Heart left ventricle (tissue), 16 donors: ENCODE measurements at regions of chr5 and their contacts with region 1.

Region 1: DNA sequence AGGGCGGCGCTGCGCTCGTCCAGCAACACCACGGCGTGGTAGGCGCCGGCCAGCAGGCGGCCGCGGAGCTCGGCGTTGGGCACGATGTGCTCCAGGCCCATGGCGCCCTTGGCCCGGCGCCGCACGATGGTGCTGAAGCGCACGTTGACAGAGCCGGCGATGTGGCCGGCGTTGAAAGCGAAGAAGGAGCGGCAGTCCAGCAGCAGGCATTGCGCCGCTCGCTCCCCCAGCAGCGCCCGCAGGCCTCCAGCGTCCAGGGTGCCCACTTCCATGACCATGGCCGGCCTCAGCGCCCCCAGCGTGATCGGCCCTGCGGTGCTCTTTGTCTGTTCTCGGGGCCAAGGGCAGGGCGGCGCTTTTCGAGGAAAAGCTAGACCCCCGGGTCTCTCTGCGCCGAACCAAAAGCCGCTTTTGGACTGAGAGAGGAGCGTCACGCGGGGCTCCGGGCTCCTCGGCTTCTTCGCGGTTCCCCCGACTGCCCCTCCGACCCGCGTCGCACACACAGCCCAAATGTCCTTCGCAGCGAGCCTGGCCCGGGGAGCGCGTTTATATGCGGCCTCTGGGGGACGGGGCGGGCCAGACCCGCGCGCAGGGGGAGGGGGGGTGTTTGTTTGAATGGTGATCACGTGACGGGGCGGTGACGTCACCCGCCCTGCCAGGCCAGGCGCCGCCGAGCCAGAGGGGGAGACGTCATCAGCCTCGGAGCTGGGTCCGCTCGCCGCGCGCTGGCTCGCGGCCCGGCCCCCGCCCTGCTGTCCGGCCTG is at the start of gene DUSP1:
- DNase-seq: peak; percentile 100
- ATAC-seq: peak; percentile 46 to 85 (median 66)
- H3K4me3 ChIP-seq: peak within 1 kb of the TSS; percentile 66 to 98 (median 88)
- H3K27ac ChIP-seq: peak within 1 kb of the TSS; percentile 95 to 100 (median 100)
- H3K4me1 ChIP-seq: peaks cover 1 to 82% (median 25%) of the 10 kb centered on the region in 12 donors
- H3K27me3 ChIP-seq: no peaks in the 10 kb centered on the region
- CTCF ChIP-seq: peak in 10 of 12 donors; percentile 15 to 53 (median 44)
- POLR2A ChIP-seq: peak; percentile 96 to 100
- total RNA-seq, gene DUSP1: 39.9 to 335 (median 78.2) TPM

Region 2: DNA sequence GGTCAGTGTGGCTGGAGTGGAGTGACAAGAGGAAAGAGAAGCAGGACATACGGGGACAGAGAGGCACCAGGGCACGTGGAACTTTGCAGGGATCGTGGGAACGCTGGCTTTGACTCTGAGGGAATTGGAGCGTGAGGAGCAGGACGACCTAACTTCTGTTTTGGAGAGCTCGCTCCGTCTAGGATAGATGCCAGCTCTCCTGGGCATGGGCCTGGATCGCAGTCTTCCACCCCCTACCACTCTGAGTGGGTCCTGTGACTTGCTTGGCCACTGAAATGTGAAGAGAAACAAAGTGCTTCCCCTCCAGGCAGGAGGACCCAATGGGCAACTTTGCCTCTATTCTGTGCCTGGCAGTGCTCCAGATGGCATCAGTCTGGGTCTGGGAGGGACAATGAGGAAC is 307.8 kb before region 1 on chr5:
- intact Hi-C with region 1: no loop called
- DNase-seq: no peak
- ATAC-seq: no peak
- H3K4me3 ChIP-seq: no peak overlapping the region
- H3K27ac ChIP-seq: no peak overlapping the region
- H3K4me1 ChIP-seq: peaks cover 0 to 35% (median 3%) of the 10 kb centered on the region in 12 donors
- H3K27me3 ChIP-seq: no peaks in the 10 kb centered on the region
- CTCF ChIP-seq: no peak
- POLR2A ChIP-seq: no peak

Region 3: DNA sequence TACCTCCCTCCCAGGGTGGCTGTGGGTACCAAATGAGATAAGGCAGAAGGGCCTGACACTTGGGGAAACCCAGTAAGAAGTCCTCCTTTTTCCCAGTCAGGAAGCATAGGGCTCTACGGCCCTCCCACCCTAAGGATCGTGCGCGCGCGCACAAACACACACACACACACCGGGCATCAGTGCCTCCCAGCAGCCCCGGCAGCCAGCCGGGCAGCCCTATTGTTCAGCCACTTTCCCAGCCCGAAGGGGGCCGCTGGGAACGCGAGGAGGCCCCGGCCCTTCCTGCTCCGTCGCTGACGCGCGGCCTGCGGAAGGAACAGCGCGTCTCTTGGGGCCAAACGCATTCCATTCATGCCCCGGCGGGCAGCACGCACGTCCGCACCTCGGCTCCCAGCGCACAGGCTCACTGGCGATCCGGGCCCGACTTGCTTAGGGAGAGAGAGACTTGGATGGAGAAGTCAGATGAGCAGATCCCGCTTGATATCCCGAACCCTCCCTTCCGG is 22.5 kb before region 1 on chr5:
- intact Hi-C with region 1: loop called in 3 of 10 experiments (anchors 1 to 2 kb)
- DNase-seq: peak; percentile 90 to 96 (median 93)
- ATAC-seq: peak; percentile 72 to 91 (median 85)
- H3K4me3 ChIP-seq: peak overlapping the region in 8 of 12 donors; percentile 6 to 28 (median 14)
- H3K27ac ChIP-seq: peak overlapping the region; percentile 76 to 97 (median 92)
- H3K4me1 ChIP-seq: peaks cover 7 to 84% (median 44%) of the 10 kb centered on the region in 12 donors
- H3K27me3 ChIP-seq: no peaks in the 10 kb centered on the region
- CTCF ChIP-seq: peak in 1 of 12 donors; percentile 10
- POLR2A ChIP-seq: peak in 1 of 2 donors; percentile 61

Region 4: GRCh38 chr5:172833686-172834414 is 63.0 kb after region 1 on chr5 and contains the start of gene ERGIC1:
- intact Hi-C with region 1: loop called in 2 of 10 experiments (anchors 2 to 10 kb)
- DNase-seq: peak; percentile 88 to 95 (median 91)
- ATAC-seq: peak; percentile 80 to 94 (median 92)
- H3K4me3 ChIP-seq: peak within 1 kb of the TSS; percentile 74 to 97 (median 85)
- H3K27ac ChIP-seq: peak within 1 kb of the TSS; percentile 64 to 91 (median 84)
- H3K4me1 ChIP-seq: peaks cover 3 to 60% (median 22%) of the 10 kb centered on the region in 12 donors
- H3K27me3 ChIP-seq: no peaks in the 10 kb centered on the region
- CTCF ChIP-seq: peak in 1 of 12 donors; percentile 5
- POLR2A ChIP-seq: peak in 1 of 2 donors; percentile 73
- total RNA-seq, gene ERGIC1: 67.0 to 109 (median 84.9) TPM

Region 5: DNA sequence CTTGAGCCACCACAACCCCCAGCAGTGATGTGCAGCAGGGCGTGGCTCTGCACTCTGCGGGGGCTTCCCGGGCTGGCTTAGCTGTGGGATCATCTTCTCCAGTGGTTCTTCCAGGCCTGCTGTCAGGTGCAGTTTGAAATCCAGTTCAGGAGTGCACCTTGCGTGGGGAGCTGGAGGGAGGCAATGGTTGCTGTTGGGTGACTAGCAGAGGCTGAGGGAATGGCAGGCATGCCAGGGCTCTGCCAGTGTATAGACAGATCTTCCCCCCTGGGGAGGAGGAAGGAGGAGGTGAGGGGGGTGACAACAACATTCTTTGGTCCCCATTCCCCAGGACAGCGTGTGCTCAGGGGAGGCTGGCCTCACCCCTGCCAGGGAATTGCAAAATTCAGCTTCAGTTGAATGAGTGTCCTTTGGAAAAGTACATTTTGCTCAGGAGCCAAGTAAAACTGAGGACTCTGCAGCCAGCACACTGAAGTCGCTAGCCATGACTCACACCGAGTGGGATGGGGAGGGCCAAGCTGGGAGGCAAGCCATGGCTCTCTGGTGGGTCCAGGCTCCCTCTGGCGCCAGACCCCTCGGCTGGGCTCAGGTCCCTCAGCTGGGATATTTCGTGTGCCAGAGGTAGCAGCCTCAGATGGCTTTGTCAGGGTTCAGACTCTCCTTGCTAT is 98.2 kb after region 1 on chr5:
- intact Hi-C with region 1: loop called in 8 of 10 experiments (anchors 1 to 10 kb)
- DNase-seq: peak; percentile 79 to 91 (median 85)
- ATAC-seq: peak; percentile 61 to 79 (median 70)
- H3K4me3 ChIP-seq: no peak overlapping the region
- H3K27ac ChIP-seq: peak overlapping the region; percentile 83 to 99 (median 94)
- H3K4me1 ChIP-seq: peaks cover 39 to 95% (median 80%) of the 10 kb centered on the region in 12 donors
- H3K27me3 ChIP-seq: no peaks in the 10 kb centered on the region
- CTCF ChIP-seq: peak in 7 of 12 donors; percentile 19 to 42 (median 26)
- POLR2A ChIP-seq: peak in 1 of 2 donors; percentile 45

Region 6: GRCh38 chr5:172902497-172903200 is 131.8 kb after region 1 on chr5:
- intact Hi-C with region 1: loop called in 8 of 10 experiments (anchors 2 to 10 kb)
- DNase-seq: peak; percentile 81 to 87 (median 85)
- ATAC-seq: peak; percentile 48 to 72 (median 59)
- H3K4me3 ChIP-seq: no peak overlapping the region
- H3K27ac ChIP-seq: peak overlapping the region; percentile 28 to 96 (median 90)
- H3K4me1 ChIP-seq: peaks cover 2 to 82% (median 64%) of the 10 kb centered on the region in 12 donors
- H3K27me3 ChIP-seq: no peaks in the 10 kb centered on the region
- CTCF ChIP-seq: peak; percentile 18 to 71 (median 58)
- POLR2A ChIP-seq: no peak